ENCODE measurements at regions of chr6 and their contacts with region 1.

Region 1: DNA sequence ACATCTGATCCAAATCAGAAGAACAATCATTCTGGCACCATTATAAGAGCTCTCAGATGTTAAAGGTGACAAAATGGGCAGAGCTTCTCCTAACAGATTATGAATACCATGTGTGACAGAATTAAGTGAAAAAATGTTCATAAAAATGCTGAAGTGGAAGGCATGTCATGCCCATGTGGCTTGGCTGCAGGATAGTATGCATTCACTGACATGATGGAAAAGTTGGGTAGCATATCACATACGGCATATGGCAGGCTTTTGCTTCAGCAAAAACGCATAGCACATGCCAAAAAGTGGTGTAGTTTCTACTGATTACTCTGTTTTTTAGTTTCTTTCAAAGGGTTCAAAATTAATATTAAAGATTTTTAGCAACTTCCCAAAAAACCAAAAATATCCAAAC is 731.5 kb upstream of the EPHA7 start:
- DNase-seq: no peak
- H3K4me3 ChIP-seq: no peak overlapping the region
- H3K27ac ChIP-seq: no peak overlapping the region
- H3K4me1 ChIP-seq: no peaks in the 10 kb centered on the region
- H3K27me3 ChIP-seq: no peaks in the 10 kb centered on the region
- CTCF ChIP-seq: no peak

Region 2: DNA sequence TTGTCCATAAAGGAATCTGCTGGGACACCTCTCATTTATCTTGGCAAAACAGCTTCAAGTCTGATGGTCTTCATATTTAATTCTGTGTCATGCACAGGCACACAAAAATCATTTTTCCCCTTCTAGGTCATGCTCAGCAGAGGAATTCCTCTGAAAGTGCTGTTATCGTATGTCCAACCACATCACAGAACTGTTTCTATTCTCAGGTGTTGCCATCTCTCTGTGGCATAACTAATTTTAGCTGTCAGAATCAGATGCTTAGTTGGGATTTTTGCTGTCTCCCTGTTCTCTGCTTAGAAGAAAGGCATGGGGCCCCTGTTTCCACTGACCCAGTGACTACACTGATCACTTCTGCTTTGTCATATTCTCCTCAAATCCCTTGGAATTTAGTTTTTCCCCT is 123.5 kb before region 1 on chr6:
- CTCF ChIA-PET with region 1: no interaction called
- POLR2A ChIA-PET with region 1: no interaction called
- intact Hi-C with region 1: no loop called
- DNase-seq: no peak
- H3K4me3 ChIP-seq: no peak overlapping the region
- H3K27ac ChIP-seq: no peak overlapping the region
- H3K4me1 ChIP-seq: no peaks in the 10 kb centered on the region
- H3K27me3 ChIP-seq: no peaks in the 10 kb centered on the region
- CTCF ChIP-seq: no peak

Region 3: DNA sequence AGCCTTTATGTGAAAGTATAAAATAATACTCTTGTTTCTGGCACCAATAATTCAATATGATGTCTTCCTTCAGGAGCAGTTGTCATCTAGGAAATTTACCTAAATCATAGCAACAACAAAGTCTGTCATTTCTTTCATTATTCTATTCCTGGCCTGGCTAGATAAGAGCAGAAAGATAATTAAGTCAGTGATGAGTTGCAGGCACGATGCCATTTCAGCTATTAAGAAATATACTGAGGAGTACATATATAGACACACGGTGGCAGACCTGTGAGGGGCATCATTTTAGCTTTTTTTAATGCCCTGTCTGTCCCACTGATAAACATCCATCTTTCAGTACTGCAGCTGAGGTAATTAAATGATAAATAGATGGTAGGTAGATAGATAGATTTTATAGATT is 24.6 kb after region 1 on chr6:
- CTCF ChIA-PET with region 1: no interaction called
- POLR2A ChIA-PET with region 1: interaction called, 11 read pairs
- intact Hi-C with region 1: no loop called
- DNase-seq: no peak
- H3K4me3 ChIP-seq: no peak overlapping the region
- H3K27ac ChIP-seq: no peak overlapping the region
- H3K4me1 ChIP-seq: no peaks in the 10 kb centered on the region
- H3K27me3 ChIP-seq: no peaks in the 10 kb centered on the region
- CTCF ChIP-seq: no peak